ENCODE measurements at regions of chr1 and their contacts with region 1.

Region 1: DNA sequence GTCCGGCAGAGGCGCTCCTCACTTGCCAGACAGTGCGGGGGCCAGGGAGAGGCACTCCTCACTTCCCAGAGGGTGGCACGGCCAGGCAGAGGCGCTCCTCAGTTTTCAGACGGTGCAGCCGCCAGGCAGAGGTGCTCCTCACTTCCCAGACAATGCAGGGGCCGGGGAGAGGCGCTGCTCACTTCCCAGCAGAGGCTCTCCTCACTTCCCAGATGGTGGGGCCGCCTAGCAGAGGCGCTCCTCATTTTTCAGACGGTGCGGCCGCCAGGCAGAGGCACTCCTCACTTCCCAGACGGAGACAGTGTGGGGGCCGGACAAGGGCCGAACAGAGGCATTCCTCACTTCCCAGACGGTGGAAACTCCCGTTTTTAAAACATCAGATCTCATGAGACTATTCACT is 238.4 kb upstream of the CACYBP start:
- DNase-seq: no peak
- ATAC-seq: no peak
- H3K4me3 ChIP-seq: no peak overlapping the region
- H3K4me3 Mint-ChIP-seq: no peak overlapping the region
- H3K27ac ChIP-seq: no peak overlapping the region
- H3K27ac Mint-ChIP-seq: peak overlapping the region in 1 of 9 donors; percentile 33
- H3K4me1 ChIP-seq: no peaks in the 10 kb centered on the region
- H3K4me1 Mint-ChIP-seq: peaks cover 0 to 4% (median 0%) of the 10 kb centered on the region in 7 donors
- H3K27me3 ChIP-seq: no peaks in the 10 kb centered on the region
- H3K27me3 Mint-ChIP-seq: no peaks in the 10 kb centered on the region

Region 2: DNA sequence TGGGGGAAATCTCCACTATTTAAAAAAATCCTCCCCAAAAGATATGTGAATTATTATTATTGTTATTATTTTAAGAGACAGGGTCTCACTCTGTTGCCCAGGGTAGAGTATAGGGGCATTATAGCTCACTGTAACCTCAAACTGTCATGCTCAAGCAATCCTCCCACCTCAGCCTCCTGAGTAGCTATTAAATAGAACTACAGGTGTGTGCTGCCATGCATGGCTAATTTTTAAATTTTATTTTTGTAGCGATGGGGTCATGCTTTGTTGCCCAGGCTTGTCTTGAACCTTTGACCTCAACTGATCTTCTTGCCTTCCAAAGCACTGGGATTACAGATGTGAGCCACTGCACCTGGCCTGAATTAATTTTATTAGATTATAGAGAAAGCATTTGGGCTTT is 485.2 kb before region 1 on chr1:
- CTCF ChIA-PET with region 1: no interaction called
- POLR2A ChIA-PET with region 1: interaction called, 11 read pairs
- intact Hi-C with region 1: no loop called
- DNase-seq: no peak
- ATAC-seq: no peak
- H3K4me3 ChIP-seq: no peak overlapping the region
- H3K4me3 Mint-ChIP-seq: no peak overlapping the region
- H3K27ac ChIP-seq: no peak overlapping the region
- H3K27ac Mint-ChIP-seq: no peak overlapping the region
- H3K4me1 ChIP-seq: no peaks in the 10 kb centered on the region
- H3K4me1 Mint-ChIP-seq: no peaks in the 10 kb centered on the region
- H3K27me3 ChIP-seq: no peaks in the 10 kb centered on the region
- H3K27me3 Mint-ChIP-seq: no peaks in the 10 kb centered on the region

Measured in naive thymus-derived CD4-positive, alpha-beta T cell (primary cell).